Activated T-helper 1 cell treated with anti-CD3 and anti-CD28 coated beads, Interleukin-12 subunit alpha, Interleukin-12 subunit beta, Interleukin-2, Interleukin-4 antibody, amounts not matched to agents 30 ng/mL and 10 ng/mL and 1 ng/mL, durations not matched to agents 14 hours and 24 hours and 36 hours (primary cell): ENCODE measurements at regions of chr1 and their contacts with region 1.

Region 1: DNA sequence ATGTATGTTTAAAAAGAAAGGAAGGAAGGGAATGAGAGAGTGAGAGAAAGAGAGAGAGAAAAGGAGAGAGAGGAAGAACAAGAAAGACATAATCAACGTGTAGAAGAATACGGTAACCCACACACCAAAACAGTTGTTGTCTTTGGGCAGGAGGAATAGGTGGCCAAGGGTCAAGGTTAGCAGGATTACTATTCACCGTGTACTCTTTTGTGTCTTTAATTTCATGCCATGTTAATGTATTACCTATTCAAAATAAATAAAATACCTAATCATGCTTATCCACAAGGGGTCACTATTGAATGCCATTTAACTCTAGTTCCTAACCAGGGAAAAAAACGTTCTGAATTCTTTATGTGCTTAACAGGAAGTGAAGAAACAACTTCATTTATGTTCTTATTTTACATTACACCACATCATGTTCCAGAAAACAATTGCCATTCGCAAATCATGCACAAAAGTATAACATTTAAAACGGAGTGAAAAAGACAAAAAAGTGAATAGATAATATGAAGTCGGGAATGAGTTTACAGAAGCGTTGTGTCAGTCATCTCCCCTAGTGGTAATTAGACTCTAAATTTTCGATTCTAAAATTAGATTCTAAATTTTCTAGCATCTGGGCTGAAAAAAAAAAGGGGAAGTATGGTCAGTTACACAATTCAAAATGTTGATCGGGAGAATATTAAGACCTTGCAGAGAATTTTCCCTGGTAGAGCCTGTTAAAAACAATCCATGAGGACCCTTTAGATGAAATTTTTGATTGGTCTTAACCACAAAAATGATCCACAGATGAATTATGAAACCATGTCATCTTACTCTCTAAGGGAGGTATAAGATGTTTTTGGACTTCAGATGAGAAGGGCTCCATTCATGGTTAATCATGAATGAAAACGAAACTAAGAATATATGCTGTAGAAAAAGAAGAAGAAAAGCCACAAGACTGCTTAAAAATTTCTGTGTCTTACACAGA is 700 bp upstream of the KMO start:
- DNase-seq: no peak
- H3K4me3 Mint-ChIP-seq: peak overlapping the region; percentile 95
- H3K27ac Mint-ChIP-seq: peak overlapping the region; percentile 89
- H3K4me1 Mint-ChIP-seq: peaks cover 16% of the 10 kb centered on the region
- H3K27me3 Mint-ChIP-seq: peaks cover 8% of the 10 kb centered on the region

Region 2: GRCh38 chr1:241519308-241520079 is 12.0 kb before region 1 on chr1 and contains the start of gene FH:
- intact Hi-C with region 1: loop called (anchors 1 kb)
- DNase-seq: peak; percentile 91
- H3K4me3 Mint-ChIP-seq: peak within 1 kb of the TSS; percentile 91
- H3K27ac Mint-ChIP-seq: peak within 1 kb of the TSS; percentile 82
- H3K4me1 Mint-ChIP-seq: peaks cover 26% of the 10 kb centered on the region
- H3K27me3 Mint-ChIP-seq: peaks cover 26% of the 10 kb centered on the region
- total RNA-seq, gene FH: 94.5 and 101 TPM in 2 replicates

Region 3: DNA sequence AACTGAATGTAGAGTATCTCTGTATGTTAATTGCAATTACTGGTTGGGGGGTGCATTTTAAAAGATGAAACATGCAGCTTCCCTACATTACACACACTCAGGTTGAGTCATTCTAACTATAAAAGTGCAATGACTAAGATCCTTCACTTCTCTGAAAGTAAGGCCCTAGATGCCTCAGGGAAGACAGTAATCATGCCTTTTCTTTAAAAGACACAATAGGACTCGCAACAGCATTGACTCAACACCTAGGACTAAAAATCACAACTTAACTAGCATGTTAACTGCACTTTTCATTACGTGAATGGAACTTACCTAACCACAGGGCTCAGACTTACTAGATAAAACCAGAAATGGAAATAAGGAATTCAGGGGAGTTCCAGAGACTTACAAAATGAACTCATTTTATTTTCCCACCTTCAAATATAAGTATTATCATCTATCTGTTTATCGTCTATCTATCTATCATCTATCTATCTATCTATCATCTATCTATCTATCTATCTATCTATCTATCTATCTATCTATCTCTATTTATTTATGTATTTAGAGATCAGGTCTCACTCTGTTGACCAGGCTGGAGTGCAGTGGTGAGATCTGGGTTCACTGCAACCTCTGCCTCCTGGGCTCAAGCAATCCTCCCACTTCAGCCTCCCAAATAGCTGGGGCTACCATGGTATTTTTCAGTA is 60.9 kb after region 1 on chr1:
- intact Hi-C with region 1: loop called (anchors 1 kb)
- DNase-seq: no peak
- H3K4me3 Mint-ChIP-seq: no peak overlapping the region
- H3K27ac Mint-ChIP-seq: peak overlapping the region; percentile 21
- H3K4me1 Mint-ChIP-seq: peaks cover 12% of the 10 kb centered on the region
- H3K27me3 Mint-ChIP-seq: no peaks in the 10 kb centered on the region

Region 4: GRCh38 chr1:241627453-241628259 is 96.2 kb after region 1 on chr1:
- intact Hi-C with region 1: loop called (anchors 1 kb)
- DNase-seq: peak; percentile 37
- H3K4me3 Mint-ChIP-seq: peak overlapping the region; percentile 77
- H3K27ac Mint-ChIP-seq: peak overlapping the region; percentile 76
- H3K4me1 Mint-ChIP-seq: peaks cover 25% of the 10 kb centered on the region
- H3K27me3 Mint-ChIP-seq: no peaks in the 10 kb centered on the region

Region 5: GRCh38 chr1:241677201-241677600 is 145.7 kb after region 1 on chr1:
- intact Hi-C with region 1: loop called (anchors 5 kb)
- DNase-seq: peak; percentile 32
- H3K4me3 Mint-ChIP-seq: peak overlapping the region; percentile 43
- H3K27ac Mint-ChIP-seq: peak overlapping the region; percentile 35
- H3K4me1 Mint-ChIP-seq: peaks cover 19% of the 10 kb centered on the region
- H3K27me3 Mint-ChIP-seq: peaks cover 5% of the 10 kb centered on the region

Region 6: GRCh38 chr1:241985787-241986186 is 454.3 kb after region 1 on chr1:
- intact Hi-C with region 1: loop called (anchors 1 kb)
- DNase-seq: no peak
- H3K4me3 Mint-ChIP-seq: no peak overlapping the region
- H3K27ac Mint-ChIP-seq: no peak overlapping the region
- H3K4me1 Mint-ChIP-seq: no peaks in the 10 kb centered on the region
- H3K27me3 Mint-ChIP-seq: peaks cover 1% of the 10 kb centered on the region

Region 7: DNA sequence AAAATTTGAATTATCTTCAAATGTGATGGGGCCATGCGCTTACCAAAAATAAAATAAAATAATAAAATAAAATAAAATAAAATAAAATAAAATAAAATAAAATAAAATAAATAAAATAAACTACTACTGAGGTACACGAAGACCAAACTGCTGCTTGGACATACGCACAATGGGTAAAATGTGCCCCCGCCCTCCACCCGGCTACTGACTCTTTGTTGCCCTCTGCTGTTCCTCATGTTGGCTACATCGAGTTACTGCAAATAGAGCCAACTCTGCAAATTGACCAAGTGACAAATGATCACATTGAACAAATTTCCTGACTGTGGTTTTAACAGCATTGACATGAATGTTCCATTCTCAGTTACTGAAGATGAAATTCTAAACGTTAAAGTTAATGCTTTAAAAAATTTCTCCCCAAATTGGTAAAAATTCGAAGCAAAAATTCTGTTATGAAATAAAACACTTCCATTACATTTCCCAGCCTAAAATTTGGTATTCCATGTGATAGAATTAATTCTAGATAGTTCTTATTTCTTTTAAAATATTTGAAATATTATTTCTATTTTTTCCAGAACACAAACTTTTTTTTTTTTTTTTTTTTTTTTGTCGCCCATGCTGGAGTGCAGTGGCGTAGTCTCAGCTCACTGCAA is 486.2 kb after region 1 on chr1:
- intact Hi-C with region 1: loop called (anchors 1 kb)
- DNase-seq: no peak
- H3K4me3 Mint-ChIP-seq: no peak overlapping the region
- H3K27ac Mint-ChIP-seq: no peak overlapping the region
- H3K4me1 Mint-ChIP-seq: no peaks in the 10 kb centered on the region
- H3K27me3 Mint-ChIP-seq: peaks cover 1% of the 10 kb centered on the region